Activated B cell treated with CpG ODN at 0.5 μM for 24 hours (primary cell): ENCODE measurements at regions of chr1 and their contacts with region 1.

Region 1: GRCh38 chr1:212284744-212285684 is at the start of gene PPP2R5A:
- DNase-seq: peak; percentile 96
- ATAC-seq: peak; percentile 86
- H3K4me3 Mint-ChIP-seq: peak within 1 kb of the TSS; percentile 96
- H3K27ac Mint-ChIP-seq: peak within 1 kb of the TSS; percentile 98
- H3K4me1 Mint-ChIP-seq: peaks cover 40% of the 10 kb centered on the region
- H3K27me3 Mint-ChIP-seq: no peaks in the 10 kb centered on the region
- CTCF ChIP-seq: no peak
- total RNA-seq, gene PPP2R5A: 27.9 and 31.6 TPM in 2 replicates

Region 2: GRCh38 chr1:211578640-211579433 is 706.2 kb before region 1 on chr1 and contains the start of gene SLC30A1:
- CTCF ChIA-PET with region 1: no interaction called
- POLR2A ChIA-PET with region 1: no interaction called
- intact Hi-C with region 1: loop called (anchors 2 kb)
- DNase-seq: peak; percentile 99
- ATAC-seq: peak; percentile 90
- H3K4me3 Mint-ChIP-seq: peak within 1 kb of the TSS; percentile 94
- H3K27ac Mint-ChIP-seq: peak within 1 kb of the TSS; percentile 89
- H3K4me1 Mint-ChIP-seq: peaks cover 28% of the 10 kb centered on the region
- H3K27me3 Mint-ChIP-seq: no peaks in the 10 kb centered on the region
- CTCF ChIP-seq: no peak
- total RNA-seq, gene SLC30A1: 14.2 and 15.6 TPM in 2 replicates

Region 3: DNA sequence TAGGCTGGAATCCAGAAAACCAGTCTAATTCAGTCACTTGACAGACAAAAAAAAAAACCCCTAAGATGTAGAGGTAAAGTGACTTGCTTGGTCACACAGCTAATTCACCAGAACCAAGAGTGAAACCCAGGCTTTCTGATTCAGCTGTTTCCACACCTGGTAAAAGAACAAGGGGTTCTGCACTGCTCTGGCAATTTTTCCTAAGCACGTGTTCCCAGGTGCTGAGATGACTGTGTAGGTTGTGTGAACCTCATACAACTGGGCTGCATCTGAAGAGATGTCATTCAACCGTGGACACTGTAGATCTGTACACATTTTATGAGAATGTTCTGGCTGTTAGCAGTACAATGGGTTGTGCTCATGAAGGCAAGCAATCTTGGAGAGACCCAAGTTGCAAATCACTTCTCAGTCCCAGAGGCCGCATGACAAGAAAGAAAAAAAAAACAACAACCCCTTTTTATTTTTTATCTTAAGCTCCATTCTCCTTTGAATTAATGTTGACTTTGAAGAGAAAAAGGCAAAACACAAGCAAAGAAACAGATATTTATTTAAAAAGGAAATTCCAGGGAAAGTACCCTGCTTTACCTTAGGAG is 345.0 kb before region 1 on chr1:
- CTCF ChIA-PET with region 1: no interaction called
- POLR2A ChIA-PET with region 1: no interaction called
- intact Hi-C with region 1: loop called (anchors 5 kb)
- DNase-seq: no peak
- ATAC-seq: peak; percentile 55
- H3K4me3 Mint-ChIP-seq: peak overlapping the region; percentile 11
- H3K27ac Mint-ChIP-seq: peak overlapping the region; percentile 56
- H3K4me1 Mint-ChIP-seq: peaks cover 43% of the 10 kb centered on the region
- H3K27me3 Mint-ChIP-seq: no peaks in the 10 kb centered on the region
- CTCF ChIP-seq: no peak

Region 4: DNA sequence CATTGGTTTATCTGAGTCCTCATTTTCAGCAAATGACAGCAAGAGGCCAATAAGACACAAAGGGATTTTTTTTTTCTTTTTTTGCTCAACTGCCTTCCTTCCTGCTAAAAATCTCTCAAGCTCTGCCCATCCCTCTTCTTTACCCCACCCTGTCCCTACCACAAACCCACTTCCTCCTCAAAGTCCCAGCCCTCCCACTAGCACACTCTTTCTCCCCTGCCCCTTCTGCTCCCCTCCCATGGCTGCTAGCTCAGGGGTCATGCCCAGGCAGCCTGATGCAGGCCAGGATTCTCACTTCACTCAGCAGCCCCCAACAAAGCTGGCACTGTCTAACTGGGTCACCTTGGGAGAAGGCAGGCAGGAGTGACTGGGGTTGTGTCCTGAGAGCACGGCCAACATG is 28.6 kb before region 1 on chr1:
- CTCF ChIA-PET with region 1: no interaction called
- POLR2A ChIA-PET with region 1: interaction called, 12 read pairs
- intact Hi-C with region 1: loop called (anchors 2 kb)
- DNase-seq: no peak
- ATAC-seq: peak; percentile 64
- H3K4me3 Mint-ChIP-seq: peak overlapping the region; percentile 55
- H3K27ac Mint-ChIP-seq: peak overlapping the region; percentile 87
- H3K4me1 Mint-ChIP-seq: peaks cover 36% of the 10 kb centered on the region
- H3K27me3 Mint-ChIP-seq: no peaks in the 10 kb centered on the region
- CTCF ChIP-seq: no peak

Region 5: GRCh38 chr1:212488397-212489283 is 203.6 kb after region 1 on chr1:
- CTCF ChIA-PET with region 1: no interaction called
- POLR2A ChIA-PET with region 1: no interaction called
- intact Hi-C with region 1: no loop called
- DNase-seq: no peak
- ATAC-seq: peak; percentile 34
- H3K4me3 Mint-ChIP-seq: no peak overlapping the region
- H3K27ac Mint-ChIP-seq: no peak overlapping the region
- H3K4me1 Mint-ChIP-seq: peaks cover 4% of the 10 kb centered on the region
- H3K27me3 Mint-ChIP-seq: peaks cover 4% of the 10 kb centered on the region
- CTCF ChIP-seq: no peak

Region 6: DNA sequence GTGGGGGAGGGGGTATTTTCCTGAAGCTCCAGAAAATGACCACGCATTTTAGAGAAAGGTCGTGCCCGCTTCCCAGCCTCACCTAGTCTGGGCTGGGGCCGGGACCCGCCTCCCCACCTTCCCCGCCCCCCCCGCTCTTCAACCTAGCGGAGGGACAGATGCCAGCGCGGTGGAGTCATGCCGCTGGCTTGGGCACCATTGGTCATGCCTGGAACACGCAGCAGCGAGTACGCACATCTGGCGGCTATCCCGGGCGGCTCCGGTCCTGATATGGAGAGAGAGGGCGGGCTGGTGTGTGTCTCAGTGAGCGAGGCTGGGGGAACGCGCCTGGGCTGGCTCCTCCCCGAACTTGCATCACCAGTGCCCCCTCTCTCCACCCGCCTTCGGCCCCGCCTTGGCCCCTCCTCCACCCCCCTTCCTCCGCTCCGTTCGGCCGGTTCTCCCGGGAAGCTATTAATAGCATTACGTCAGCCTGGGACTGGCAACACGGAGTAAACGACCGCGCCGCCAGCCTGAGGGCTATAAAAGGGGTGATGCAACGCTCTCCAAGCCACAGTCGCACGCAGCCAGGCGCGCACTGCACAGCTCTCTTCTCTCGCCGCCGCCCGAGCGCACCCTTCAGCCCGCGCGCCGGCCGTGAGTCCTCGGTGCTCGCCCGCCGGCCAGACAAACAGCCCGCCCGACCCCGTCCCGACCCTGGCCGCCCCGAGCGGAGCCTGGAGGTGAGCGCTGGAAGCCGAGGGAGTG is 323.4 kb after region 1 on chr1 and contains the start of gene ATF3:
- CTCF ChIA-PET with region 1: no interaction called
- POLR2A ChIA-PET with region 1: no interaction called
- intact Hi-C with region 1: loop called (anchors 2 kb)
- DNase-seq: peak; percentile 76
- ATAC-seq: peak; percentile 84
- H3K4me3 Mint-ChIP-seq: peak within 1 kb of the TSS; percentile 95
- H3K27ac Mint-ChIP-seq: peak within 1 kb of the TSS; percentile 90
- H3K4me1 Mint-ChIP-seq: peaks cover 29% of the 10 kb centered on the region
- H3K27me3 Mint-ChIP-seq: peaks cover 32% of the 10 kb centered on the region
- CTCF ChIP-seq: no peak
- total RNA-seq, gene ATF3: 13.1 and 16.8 TPM in 2 replicates

Region 7: GRCh38 chr1:212857992-212858460 is 573.0 kb after region 1 on chr1 and contains the start of gene FLVCR1:
- CTCF ChIA-PET with region 1: no interaction called
- POLR2A ChIA-PET with region 1: interaction called, 3 read pairs
- intact Hi-C with region 1: loop called (anchors 10 kb)
- DNase-seq: peak; percentile 90
- ATAC-seq: peak; percentile 99
- H3K4me3 Mint-ChIP-seq: peak within 1 kb of the TSS; percentile 99
- H3K27ac Mint-ChIP-seq: peak within 1 kb of the TSS; percentile 93
- H3K4me1 Mint-ChIP-seq: peaks cover 22% of the 10 kb centered on the region
- H3K27me3 Mint-ChIP-seq: no peaks in the 10 kb centered on the region
- CTCF ChIP-seq: no peak
- total RNA-seq, gene FLVCR1: 12.7 and 16.4 TPM in 2 replicates